Naive thymus-derived CD4-positive, alpha-beta T cell (primary cell): ENCODE measurements at regions of chr4 and their contacts with region 1.

Region 1: GRCh38 chr4:54941994-54942552 is 183.3 kb downstream of the KDR start:
- DNase-seq: peak in 8 of 9 donors; percentile 22 to 82 (median 71)
- ATAC-seq: peak; percentile 79
- H3K4me3 ChIP-seq: peak overlapping the region; percentile 36
- H3K4me3 Mint-ChIP-seq: peak overlapping the region; percentile 71 to 85 (median 79)
- H3K27ac ChIP-seq: peak overlapping the region; percentile 87
- H3K27ac Mint-ChIP-seq: peak overlapping the region; percentile 79 to 99 (median 97)
- H3K4me1 ChIP-seq: peaks cover 0 to 37% of the 10 kb centered on the region in 2 donors
- H3K4me1 Mint-ChIP-seq: peaks cover 27 to 77% (median 58%) of the 10 kb centered on the region in 7 donors
- H3K27me3 ChIP-seq: no peaks in the 10 kb centered on the region
- H3K27me3 Mint-ChIP-seq: peaks cover 0 to 5% (median 0%) of the 10 kb centered on the region in 5 donors

Region 2: DNA sequence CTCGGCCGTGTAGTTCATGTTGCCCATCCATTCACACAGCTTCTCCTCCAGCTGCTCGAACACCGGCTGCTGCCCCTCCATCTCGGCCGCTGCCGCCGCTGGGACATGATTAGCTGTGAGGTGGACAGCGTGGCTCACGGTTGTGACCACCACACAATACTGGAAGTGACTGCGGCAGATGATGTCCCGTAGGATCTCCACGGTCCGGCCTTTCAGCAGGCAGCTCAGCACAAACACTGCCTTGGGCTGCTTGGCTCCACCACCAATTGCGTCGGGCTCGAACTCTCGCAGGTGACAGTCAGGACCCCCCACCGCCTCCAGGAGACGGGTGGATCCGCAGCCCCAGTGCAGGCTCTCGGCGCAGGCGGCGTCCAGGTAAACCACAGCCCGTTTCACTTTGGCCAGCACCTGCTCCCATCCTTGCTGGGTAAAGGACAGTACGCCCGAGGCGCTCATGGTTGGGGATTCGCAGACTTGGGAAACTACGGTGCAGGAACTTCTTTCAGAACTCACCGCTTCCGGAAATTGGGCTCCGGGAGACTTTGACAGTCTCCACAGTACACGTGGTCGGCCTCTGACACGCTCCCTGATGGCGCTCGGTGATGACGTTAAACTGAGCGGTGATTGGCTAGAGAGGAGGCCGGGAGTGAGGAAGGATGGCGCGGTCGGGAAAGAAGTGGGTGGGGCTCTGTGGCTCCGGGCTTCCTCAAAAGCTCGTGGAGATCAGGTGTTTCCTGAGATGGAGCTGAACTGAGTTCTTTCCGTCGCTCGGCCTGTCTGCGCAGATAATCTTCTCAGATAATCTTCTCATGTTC is 1576.4 kb before region 1 on chr4 and contains the start of gene SCFD2:
- CTCF ChIA-PET with region 1: no interaction called
- POLR2A ChIA-PET with region 1: no interaction called
- intact Hi-C with region 1: loop called in 1 of 2 experiments (anchors 10 kb)
- DNase-seq: peak; percentile 86 to 97 (median 94)
- ATAC-seq: peak; percentile 99
- H3K4me3 ChIP-seq: peak within 1 kb of the TSS; percentile 72
- H3K4me3 Mint-ChIP-seq: peak within 1 kb of the TSS; percentile 92 to 99 (median 96)
- H3K27ac ChIP-seq: peak within 1 kb of the TSS; percentile 85
- H3K27ac Mint-ChIP-seq: peak within 1 kb of the TSS; percentile 95 to 99 (median 96)
- H3K4me1 ChIP-seq: peaks cover 7 to 23% of the 10 kb centered on the region in 2 donors
- H3K4me1 Mint-ChIP-seq: peaks cover 32 to 64% (median 50%) of the 10 kb centered on the region in 7 donors
- H3K27me3 ChIP-seq: no peaks in the 10 kb centered on the region
- H3K27me3 Mint-ChIP-seq: peaks cover 0 to 20% (median 3%) of the 10 kb centered on the region in 5 donors
- total RNA-seq, gene SCFD2: 13.4 to 32.8 (median 28.0) TPM

Region 3: GRCh38 chr4:54091637-54092404 is 850.3 kb before region 1 on chr4:
- CTCF ChIA-PET with region 1: no interaction called
- POLR2A ChIA-PET with region 1: no interaction called
- intact Hi-C with region 1: loop called in 1 of 2 experiments (anchors 10 kb)
- DNase-seq: peak; percentile 72 to 89 (median 83)
- ATAC-seq: peak; percentile 91
- H3K4me3 ChIP-seq: peak overlapping the region; percentile 67
- H3K4me3 Mint-ChIP-seq: peak overlapping the region; percentile 87 to 97 (median 88)
- H3K27ac ChIP-seq: no peak overlapping the region
- H3K27ac Mint-ChIP-seq: peak overlapping the region in 7 of 9 donors; percentile 2 to 66 (median 29)
- H3K4me1 ChIP-seq: peaks cover 0 to 11% of the 10 kb centered on the region in 2 donors
- H3K4me1 Mint-ChIP-seq: peaks cover 18 to 36% (median 29%) of the 10 kb centered on the region in 7 donors
- H3K27me3 ChIP-seq: peaks cover 11 to 33% of the 10 kb centered on the region in 2 donors
- H3K27me3 Mint-ChIP-seq: peaks cover 56 to 83% (median 59%) of the 10 kb centered on the region in 5 donors

Region 4: DNA sequence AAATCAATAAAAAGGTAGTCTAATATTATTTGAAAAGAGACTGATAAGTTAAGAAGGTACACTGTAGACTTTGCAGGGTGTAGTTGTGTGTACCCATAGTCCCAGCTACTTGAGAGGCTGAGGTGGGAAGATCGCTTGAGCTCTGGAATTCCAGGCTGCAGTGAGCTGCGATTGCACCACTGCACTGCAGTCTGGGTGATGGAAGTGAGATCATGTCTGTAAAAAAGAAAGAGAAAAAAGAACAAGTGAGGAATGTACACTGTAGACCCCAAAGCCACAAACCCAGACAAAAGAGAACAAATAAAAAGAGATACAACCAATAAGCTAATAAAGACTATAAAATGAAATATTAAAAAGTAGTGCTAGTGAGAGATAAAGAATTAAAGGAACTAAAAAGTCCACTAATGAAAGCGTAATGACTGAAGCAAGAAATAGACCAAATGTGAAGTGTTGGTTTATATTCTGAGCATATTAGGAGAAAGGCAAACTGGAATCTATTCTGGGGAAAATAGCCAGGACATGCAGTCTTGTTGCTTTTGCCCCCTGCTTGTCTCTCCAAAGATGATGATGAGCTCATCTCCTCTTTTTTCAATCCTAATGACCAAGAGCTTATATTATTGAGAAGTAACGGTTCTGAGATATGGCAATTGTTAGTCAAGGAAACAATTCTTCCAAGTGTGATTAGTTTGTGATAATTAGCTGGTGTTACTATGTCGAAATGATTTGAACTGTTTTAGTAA is 823.1 kb before region 1 on chr4:
- CTCF ChIA-PET with region 1: no interaction called
- POLR2A ChIA-PET with region 1: no interaction called
- intact Hi-C with region 1: no loop called
- DNase-seq: no peak
- ATAC-seq: no peak
- H3K4me3 ChIP-seq: no peak overlapping the region
- H3K4me3 Mint-ChIP-seq: no peak overlapping the region
- H3K27ac ChIP-seq: no peak overlapping the region
- H3K27ac Mint-ChIP-seq: no peak overlapping the region
- H3K4me1 ChIP-seq: no peaks in the 10 kb centered on the region
- H3K4me1 Mint-ChIP-seq: no peaks in the 10 kb centered on the region
- H3K27me3 ChIP-seq: no peaks in the 10 kb centered on the region
- H3K27me3 Mint-ChIP-seq: peaks cover 6 to 51% (median 37%) of the 10 kb centered on the region in 5 donors

Region 5: DNA sequence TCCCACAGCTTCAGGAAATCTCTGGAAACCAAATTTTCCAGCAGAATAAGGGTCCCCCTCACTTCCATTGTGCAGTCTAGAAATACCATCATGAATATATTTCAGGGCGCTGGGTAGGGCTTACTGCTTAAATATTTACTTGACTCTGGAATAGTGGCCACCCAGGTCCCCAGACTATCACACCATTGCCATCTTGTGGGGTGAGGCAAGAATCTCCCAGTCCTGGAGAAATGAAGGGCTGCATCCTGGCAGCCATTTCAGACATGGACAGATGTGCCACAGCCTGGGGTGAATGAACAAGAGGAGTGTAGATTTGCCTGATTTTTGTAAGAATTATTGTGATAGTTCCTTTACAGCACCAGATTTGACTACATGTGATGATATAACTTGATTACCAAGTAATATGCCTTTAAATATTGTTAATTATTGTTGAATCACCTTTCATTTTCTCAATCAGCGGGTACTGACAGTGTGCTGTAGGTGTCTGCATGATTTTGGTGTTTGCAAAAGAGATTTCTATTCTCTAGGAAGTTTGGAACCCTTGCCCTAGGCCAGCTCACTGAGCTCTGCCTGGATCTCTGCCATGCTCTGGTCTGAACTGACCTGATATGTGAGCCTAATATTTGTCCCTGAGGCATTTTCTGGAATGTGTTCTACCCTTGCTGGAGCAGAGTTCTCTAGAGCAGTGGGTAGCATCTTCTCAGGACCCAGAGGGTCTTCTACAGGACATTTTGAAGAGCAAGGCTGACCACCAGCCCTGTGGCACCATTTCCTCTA is 100.9 kb before region 1 on chr4:
- CTCF ChIA-PET with region 1: no interaction called
- POLR2A ChIA-PET with region 1: no interaction called
- intact Hi-C with region 1: loop called in 1 of 2 experiments (anchors 5 kb)
- DNase-seq: peak in 1 of 9 donors; percentile 2
- ATAC-seq: no peak
- H3K4me3 ChIP-seq: no peak overlapping the region
- H3K4me3 Mint-ChIP-seq: no peak overlapping the region
- H3K27ac ChIP-seq: no peak overlapping the region
- H3K27ac Mint-ChIP-seq: no peak overlapping the region
- H3K4me1 ChIP-seq: no peaks in the 10 kb centered on the region
- H3K4me1 Mint-ChIP-seq: peaks cover 0 to 5% (median 3%) of the 10 kb centered on the region in 7 donors
- H3K27me3 ChIP-seq: no peaks in the 10 kb centered on the region
- H3K27me3 Mint-ChIP-seq: no peaks in the 10 kb centered on the region

Region 6: GRCh38 chr4:55345980-55346850 is 404.1 kb after region 1 on chr4 and contains the start of gene SRD5A3:
- CTCF ChIA-PET with region 1: no interaction called
- POLR2A ChIA-PET with region 1: no interaction called
- intact Hi-C with region 1: loop called in 1 of 2 experiments (anchors 10 kb)
- DNase-seq: peak; percentile 53 to 92 (median 72)
- ATAC-seq: peak; percentile 97
- H3K4me3 ChIP-seq: peak within 1 kb of the TSS; percentile 79
- H3K4me3 Mint-ChIP-seq: peak within 1 kb of the TSS; percentile 83 to 94 (median 90)
- H3K27ac ChIP-seq: peak within 1 kb of the TSS; percentile 69
- H3K27ac Mint-ChIP-seq: peak within 1 kb of the TSS; percentile 70 to 91 (median 87)
- H3K4me1 ChIP-seq: peaks cover 6 to 8% of the 10 kb centered on the region in 2 donors
- H3K4me1 Mint-ChIP-seq: peaks cover 8 to 23% (median 19%) of the 10 kb centered on the region in 7 donors
- H3K27me3 ChIP-seq: no peaks in the 10 kb centered on the region
- H3K27me3 Mint-ChIP-seq: no peaks in the 10 kb centered on the region
- total RNA-seq, gene SRD5A3: 1.9 to 8.5 (median 4.5) TPM

Region 7: GRCh38 chr4:55592014-55592413 is 649.9 kb after region 1 on chr4 and contains the start of gene PDCL2:
- CTCF ChIA-PET with region 1: no interaction called
- POLR2A ChIA-PET with region 1: no interaction called
- intact Hi-C with region 1: no loop called
- DNase-seq: no peak
- ATAC-seq: no peak
- H3K4me3 ChIP-seq: no peak within 1 kb of the TSS
- H3K4me3 Mint-ChIP-seq: no peak within 1 kb of the TSS
- H3K27ac ChIP-seq: no peak within 1 kb of the TSS
- H3K27ac Mint-ChIP-seq: no peak within 1 kb of the TSS
- H3K4me1 ChIP-seq: no peaks in the 10 kb centered on the region
- H3K4me1 Mint-ChIP-seq: no peaks in the 10 kb centered on the region
- H3K27me3 ChIP-seq: no peaks in the 10 kb centered on the region
- H3K27me3 Mint-ChIP-seq: peaks cover 0 to 19% (median 7%) of the 10 kb centered on the region in 5 donors
- total RNA-seq, gene PDCL2: not detected

Region 8: DNA sequence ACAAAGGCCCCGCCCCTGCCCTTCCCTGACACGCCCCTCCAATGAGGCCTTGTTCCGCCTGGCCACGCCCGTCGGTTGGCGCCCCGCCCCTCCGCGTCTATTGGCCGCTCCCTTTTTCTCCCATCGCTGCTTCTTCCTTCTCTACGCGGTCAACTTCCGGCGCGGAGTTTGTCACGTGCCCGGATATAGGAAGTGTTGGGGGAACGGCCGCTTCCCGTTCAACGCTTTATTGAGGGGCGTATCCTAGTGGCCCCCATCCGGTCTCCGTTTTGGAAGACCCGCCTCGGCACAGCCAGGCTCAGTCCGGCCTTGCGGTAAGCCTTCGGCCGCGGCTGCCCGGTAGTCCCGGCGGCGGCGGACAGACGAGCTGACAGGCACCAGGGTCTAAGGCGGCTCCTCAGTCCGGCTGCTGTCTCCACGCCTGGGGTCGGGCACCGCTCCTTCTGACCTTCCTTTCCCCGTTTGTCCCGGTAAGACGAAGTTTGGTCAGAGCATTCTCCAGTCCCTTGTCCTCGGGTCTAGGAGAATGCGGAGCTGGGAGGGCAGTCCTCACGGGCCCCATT is 911.5 kb after region 1 on chr4 and contains the start of gene EXOC1:
- CTCF ChIA-PET with region 1: no interaction called
- POLR2A ChIA-PET with region 1: no interaction called
- intact Hi-C with region 1: loop called in 1 of 2 experiments (anchors 1 kb)
- DNase-seq: peak; percentile 93 to 98 (median 94)
- ATAC-seq: peak; percentile 99
- H3K4me3 ChIP-seq: peak within 1 kb of the TSS; percentile 84
- H3K4me3 Mint-ChIP-seq: peak within 1 kb of the TSS in 2 of 10 donors; percentile 34 to 69
- H3K27ac ChIP-seq: peak within 1 kb of the TSS; percentile 87
- H3K27ac Mint-ChIP-seq: peak within 1 kb of the TSS in 7 of 9 donors; percentile 75 to 94 (median 90)
- H3K4me1 ChIP-seq: peaks cover 26 to 31% of the 10 kb centered on the region in 2 donors
- H3K4me1 Mint-ChIP-seq: peaks cover 22 to 48% (median 42%) of the 10 kb centered on the region in 7 donors
- H3K27me3 ChIP-seq: no peaks in the 10 kb centered on the region
- H3K27me3 Mint-ChIP-seq: no peaks in the 10 kb centered on the region
- total RNA-seq, gene EXOC1: 20.3 to 46.7 (median 32.1) TPM